MCF 10A (cell line): ENCODE measurements at regions of chr5 and their contacts with region 1.

Region 1: DNA sequence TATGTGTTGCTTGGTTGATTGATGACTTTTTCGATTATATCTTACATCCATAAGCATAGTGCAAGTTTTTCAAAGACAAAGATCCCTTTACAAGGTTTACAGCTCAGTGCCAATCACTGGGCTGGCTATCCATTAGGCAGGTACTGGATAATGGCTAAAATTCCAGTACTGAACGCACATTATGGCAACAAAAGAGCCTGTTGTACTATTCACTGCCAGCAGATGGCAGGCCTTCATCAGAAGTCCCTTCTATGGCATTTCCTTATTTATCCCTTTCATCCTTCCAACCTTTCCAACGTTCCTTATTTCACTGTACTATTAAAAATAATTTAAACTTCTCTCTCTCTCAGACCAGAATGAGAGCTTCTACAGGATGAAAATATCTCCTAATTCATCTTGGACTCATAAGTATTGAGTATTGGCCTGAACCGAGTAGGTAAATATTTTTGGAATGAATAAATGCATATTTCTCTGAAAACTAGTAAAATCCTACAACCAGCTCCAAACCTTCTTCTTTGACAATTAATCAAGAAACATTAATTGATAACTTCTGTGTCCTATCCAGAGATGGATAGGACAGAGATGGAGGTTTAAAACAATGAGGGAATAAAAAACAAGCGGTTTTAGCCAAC is 6.7 kb upstream of the WNT8A start:
- DNase-seq: peak; percentile 82
- H3K4me3 Mint-ChIP-seq: no peak overlapping the region
- H3K27ac Mint-ChIP-seq: no peak overlapping the region
- H3K4me1 Mint-ChIP-seq: no peaks in the 10 kb centered on the region
- H3K27me3 Mint-ChIP-seq: no peaks in the 10 kb centered on the region
- CTCF ChIP-seq: peak; percentile 95

Region 2: GRCh38 chr5:138054847-138055558 is 22.2 kb before region 1 on chr5:
- CTCF ChIA-PET with region 1: interaction called, 20 read pairs
- POLR2A ChIA-PET with region 1: no interaction called
- intact Hi-C with region 1: no loop called
- DNase-seq: no peak
- H3K4me3 Mint-ChIP-seq: no peak overlapping the region
- H3K27ac Mint-ChIP-seq: no peak overlapping the region
- H3K4me1 Mint-ChIP-seq: no peaks in the 10 kb centered on the region
- H3K27me3 Mint-ChIP-seq: peaks cover 18% of the 10 kb centered on the region
- CTCF ChIP-seq: no peak

Region 3: GRCh38 chr5:138093036-138093435 is 15.9 kb after region 1 on chr5:
- CTCF ChIA-PET with region 1: interaction called, 122 read pairs
- POLR2A ChIA-PET with region 1: interaction called, 3 read pairs
- intact Hi-C with region 1: no loop called
- DNase-seq: no peak
- H3K4me3 Mint-ChIP-seq: no peak overlapping the region
- H3K27ac Mint-ChIP-seq: no peak overlapping the region
- H3K4me1 Mint-ChIP-seq: no peaks in the 10 kb centered on the region
- H3K27me3 Mint-ChIP-seq: peaks cover 86% of the 10 kb centered on the region
- CTCF ChIP-seq: no peak

Region 4: DNA sequence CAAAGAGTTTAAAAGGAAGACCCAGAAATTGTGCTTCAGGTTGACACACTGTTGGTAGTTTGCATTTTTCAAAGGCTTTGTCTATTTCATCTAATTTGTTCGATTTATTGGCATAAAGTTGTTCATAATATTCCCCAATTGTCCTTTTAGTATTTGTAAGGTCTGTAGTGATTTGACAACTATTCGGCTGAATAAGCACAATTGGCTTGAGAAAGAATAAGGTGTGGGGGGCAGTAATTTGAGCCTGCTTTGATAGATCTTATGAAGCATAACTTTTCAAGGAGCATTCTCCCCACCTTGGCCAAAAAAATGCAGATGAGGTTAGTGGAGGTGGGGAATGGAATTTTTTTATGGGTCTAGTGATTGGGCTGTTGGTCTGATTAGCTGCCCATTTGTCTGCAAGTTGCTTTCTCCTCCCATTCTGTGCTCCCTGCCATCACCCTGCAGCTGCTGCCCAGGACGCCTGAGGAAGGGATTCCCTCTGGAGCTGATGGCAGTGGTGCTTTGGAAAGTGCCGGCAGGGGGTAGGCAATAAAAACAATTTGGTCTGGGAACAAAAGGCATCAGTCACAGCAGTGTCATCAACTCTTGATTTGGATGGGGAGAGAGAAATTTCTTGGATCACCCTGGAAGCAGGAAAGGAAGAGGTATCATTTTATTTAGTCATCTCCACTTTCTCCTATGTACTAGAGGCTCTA is 33.2 kb after region 1 on chr5:
- CTCF ChIA-PET with region 1: interaction called, 18 read pairs
- POLR2A ChIA-PET with region 1: no interaction called
- intact Hi-C with region 1: loop called (anchors 2 kb)
- DNase-seq: no peak
- H3K4me3 Mint-ChIP-seq: no peak overlapping the region
- H3K27ac Mint-ChIP-seq: no peak overlapping the region
- H3K4me1 Mint-ChIP-seq: peaks cover 5% of the 10 kb centered on the region
- H3K27me3 Mint-ChIP-seq: peaks cover 39% of the 10 kb centered on the region
- CTCF ChIP-seq: no peak

Region 5: DNA sequence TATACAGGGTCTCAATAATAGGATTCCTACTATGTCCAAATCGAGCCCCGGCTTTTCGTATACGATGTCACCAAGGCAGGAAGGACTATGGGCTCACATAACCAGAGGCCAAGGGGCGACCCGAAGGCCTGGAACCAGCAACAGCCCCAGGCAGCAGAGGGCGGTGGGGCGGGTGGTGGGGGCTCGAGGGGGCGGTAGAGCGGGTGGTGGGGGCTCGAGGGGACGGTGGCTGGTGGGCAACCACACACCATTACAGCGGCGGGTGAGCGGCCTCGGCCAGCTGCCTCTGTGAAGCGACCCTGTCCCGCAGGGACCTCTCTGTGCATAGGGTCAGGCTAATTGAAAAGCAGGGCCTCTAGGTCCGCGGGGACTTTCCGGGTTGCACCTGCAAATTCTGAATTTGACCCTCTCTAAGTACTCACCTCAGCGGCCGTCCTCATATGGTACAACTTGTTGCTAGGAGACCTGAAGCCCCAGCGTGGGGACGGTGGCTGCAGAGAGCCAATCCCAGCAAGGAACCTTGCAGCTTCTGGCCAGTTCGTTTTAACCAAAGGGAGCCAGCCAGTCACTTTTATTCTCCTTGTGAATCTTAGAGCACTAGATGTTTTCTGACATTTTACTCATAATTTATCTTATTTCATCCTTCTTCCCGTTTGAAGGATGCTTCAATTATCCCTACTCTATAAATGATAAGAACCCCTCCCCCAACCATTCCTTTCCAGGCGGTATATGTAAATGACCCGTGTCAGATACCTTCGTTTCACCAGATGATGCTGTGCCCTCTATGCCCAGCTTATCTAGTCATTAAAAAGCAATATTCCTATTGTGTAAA is 62.0 kb after region 1 on chr5 and contains the start of gene NME5:
- CTCF ChIA-PET with region 1: interaction called, 199 read pairs
- POLR2A ChIA-PET with region 1: interaction called, 3 read pairs
- intact Hi-C with region 1: no loop called
- DNase-seq: no peak
- H3K4me3 Mint-ChIP-seq: peak within 1 kb of the TSS; percentile 21
- H3K27ac Mint-ChIP-seq: no peak within 1 kb of the TSS
- H3K4me1 Mint-ChIP-seq: no peaks in the 10 kb centered on the region
- H3K27me3 Mint-ChIP-seq: no peaks in the 10 kb centered on the region
- CTCF ChIP-seq: no peak
- total RNA-seq, gene NME5: 1.0 TPM in 1 of 2 replicates, not detected in the other

Region 6: DNA sequence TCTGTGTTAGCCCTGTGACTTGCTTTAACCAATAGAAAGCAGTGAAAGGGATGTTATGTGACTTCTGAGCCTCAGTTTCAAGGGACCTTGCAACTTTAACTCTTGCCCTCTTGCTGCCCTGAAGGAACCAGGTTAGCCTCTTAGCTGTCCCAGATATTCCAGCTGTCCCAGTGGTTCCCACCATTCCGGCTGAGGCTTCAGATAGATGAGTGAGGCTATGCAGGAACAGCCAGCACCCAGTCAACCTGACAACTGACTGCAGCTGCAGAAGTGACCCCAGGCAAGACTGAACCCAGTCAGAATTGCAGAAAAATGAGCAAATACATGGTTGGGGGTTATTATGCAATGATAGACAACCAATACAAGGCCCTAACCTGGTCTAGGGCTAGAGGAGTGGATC is 146.4 kb after region 1 on chr5:
- CTCF ChIA-PET with region 1: no interaction called
- POLR2A ChIA-PET with region 1: no interaction called
- intact Hi-C with region 1: no loop called
- DNase-seq: no peak
- H3K4me3 Mint-ChIP-seq: no peak overlapping the region
- H3K27ac Mint-ChIP-seq: no peak overlapping the region
- H3K4me1 Mint-ChIP-seq: peaks cover 7% of the 10 kb centered on the region
- H3K27me3 Mint-ChIP-seq: no peaks in the 10 kb centered on the region
- CTCF ChIP-seq: no peak

Region 7: DNA sequence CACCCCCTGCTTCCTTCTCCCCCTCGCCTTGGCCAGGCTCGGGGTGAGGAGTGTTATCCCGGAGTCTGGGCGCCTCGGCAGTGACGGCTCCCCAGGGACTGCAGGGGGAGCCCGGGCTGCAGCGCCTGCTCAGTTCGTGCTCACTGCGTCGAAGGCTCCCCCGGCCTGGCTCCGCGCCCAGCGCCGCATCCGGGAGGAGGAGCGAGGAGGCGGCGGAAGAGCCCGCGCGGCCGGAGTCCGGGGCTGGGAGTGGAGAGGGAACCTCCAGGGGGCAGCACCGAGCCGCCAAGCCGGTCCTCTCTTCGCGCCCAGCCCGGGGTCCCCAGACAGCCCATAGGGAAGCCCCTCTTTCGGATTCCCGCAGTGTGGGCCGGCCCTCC is 386.8 kb after region 1 on chr5:
- CTCF ChIA-PET with region 1: no interaction called
- POLR2A ChIA-PET with region 1: no interaction called
- intact Hi-C with region 1: no loop called
- DNase-seq: peak; percentile 98
- H3K4me3 Mint-ChIP-seq: peak overlapping the region; percentile 78
- H3K27ac Mint-ChIP-seq: peak overlapping the region; percentile 93
- H3K4me1 Mint-ChIP-seq: peaks cover 45% of the 10 kb centered on the region
- H3K27me3 Mint-ChIP-seq: peaks cover 20% of the 10 kb centered on the region
- CTCF ChIP-seq: peak; percentile 97